Left ventricle myocardium inferior (tissue), 1 donor: ENCODE measurements at regions of chr3 and their contacts with region 1.

Region 1: DNA sequence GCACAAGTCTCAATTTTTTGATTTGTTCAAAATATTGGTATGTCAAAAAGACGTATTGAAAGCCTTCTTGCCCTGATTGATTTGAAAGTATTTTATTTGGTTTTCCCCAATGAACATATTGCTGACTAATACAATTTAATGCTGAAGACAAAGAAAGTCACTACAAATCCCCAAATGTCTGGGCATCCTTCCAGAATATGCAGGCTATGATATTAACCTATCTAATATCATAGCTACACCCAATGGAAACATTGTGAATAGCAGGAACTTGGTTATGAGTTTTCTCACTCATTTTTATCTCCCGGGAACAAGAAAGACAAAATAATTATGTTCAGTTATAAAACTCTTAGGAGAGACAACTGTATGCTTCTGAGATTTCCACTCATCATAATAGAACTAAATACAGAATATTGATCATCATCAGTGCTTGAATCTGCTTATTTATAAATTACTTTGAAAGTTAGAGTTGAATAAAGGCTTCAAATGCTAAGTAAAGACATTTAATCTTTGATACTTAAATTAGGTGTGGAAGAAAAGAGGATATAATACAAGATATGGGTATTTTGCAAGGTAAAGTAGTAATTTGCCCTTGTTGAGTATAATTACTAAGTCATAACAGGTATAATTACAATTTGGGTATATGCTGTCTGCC is 483.9 kb downstream of the RBMS3 start:
- DNase-seq: no peak
- H3K4me3 ChIP-seq: no peak overlapping the region
- H3K27ac ChIP-seq: peak overlapping the region; percentile 3
- H3K4me1 ChIP-seq: peaks cover 39% of the 10 kb centered on the region
- H3K27me3 ChIP-seq: no peaks in the 10 kb centered on the region
- CTCF ChIP-seq: peak; percentile 82

Region 2: DNA sequence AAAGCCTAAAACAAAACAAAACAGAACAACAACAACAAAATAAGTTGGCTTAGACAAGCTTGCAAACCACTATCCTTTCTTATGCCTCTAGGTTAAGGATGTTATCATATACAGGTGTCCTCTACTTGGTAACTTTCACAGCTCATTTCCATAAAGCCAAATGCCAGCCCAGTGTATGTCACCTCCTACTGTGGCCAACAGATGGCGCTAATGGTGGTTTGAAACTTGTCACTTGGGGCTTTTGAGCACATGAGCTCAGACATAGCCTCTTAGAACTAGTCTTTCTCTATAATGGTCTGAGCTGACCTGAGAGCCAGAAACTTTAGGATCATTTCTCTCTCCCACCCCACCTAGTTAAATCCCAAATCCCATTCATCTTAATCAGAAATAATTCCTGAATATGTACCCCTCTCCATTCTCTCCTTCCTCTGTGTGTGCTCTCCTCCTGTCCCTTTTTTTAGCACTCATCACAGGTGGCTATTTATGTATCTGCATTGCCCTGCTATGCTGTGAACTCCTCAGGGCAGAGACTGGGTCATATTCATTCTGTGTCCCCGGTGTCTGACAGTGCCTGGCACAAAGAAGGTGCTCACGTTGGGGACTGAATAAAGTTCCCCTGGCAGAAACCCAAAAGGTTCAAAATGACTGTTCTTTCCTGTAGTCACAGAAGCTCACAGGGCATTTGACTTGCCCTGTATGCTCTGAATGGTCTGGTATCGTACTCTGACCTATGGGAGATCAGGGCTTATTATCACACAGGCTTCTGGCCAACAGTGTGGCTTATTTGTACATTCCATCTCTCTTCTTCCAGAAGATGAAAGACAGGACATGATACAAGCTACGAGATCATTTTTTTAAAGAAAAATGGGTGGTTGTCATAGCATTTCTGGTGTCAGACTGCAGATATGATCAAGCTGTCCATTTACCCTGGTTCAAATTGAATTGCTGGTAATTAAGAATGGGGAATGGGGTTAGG is 1096.8 kb before region 1 on chr3:
- intact Hi-C with region 1: loop called (anchors 10 kb)
- DNase-seq: peak; percentile 39
- H3K4me3 ChIP-seq: no peak overlapping the region
- H3K27ac ChIP-seq: peak overlapping the region; percentile 79
- H3K4me1 ChIP-seq: peaks cover 32% of the 10 kb centered on the region
- H3K27me3 ChIP-seq: no peaks in the 10 kb centered on the region
- CTCF ChIP-seq: peak; percentile 90

Region 3: GRCh38 chr3:28916713-28917499 is 847.8 kb before region 1 on chr3:
- intact Hi-C with region 1: loop called (anchors 10 kb)
- DNase-seq: peak; percentile 54
- H3K4me3 ChIP-seq: peak overlapping the region; percentile 52
- H3K27ac ChIP-seq: peak overlapping the region; percentile 69
- H3K4me1 ChIP-seq: peaks cover 10% of the 10 kb centered on the region
- H3K27me3 ChIP-seq: no peaks in the 10 kb centered on the region
- CTCF ChIP-seq: peak; percentile 79

Region 4: GRCh38 chr3:29144807-29145206 is 619.9 kb before region 1 on chr3:
- intact Hi-C with region 1: loop called (anchors 10 kb)
- DNase-seq: peak; percentile 20
- H3K4me3 ChIP-seq: no peak overlapping the region
- H3K27ac ChIP-seq: no peak overlapping the region
- H3K4me1 ChIP-seq: peaks cover 19% of the 10 kb centered on the region
- H3K27me3 ChIP-seq: no peaks in the 10 kb centered on the region
- CTCF ChIP-seq: peak; percentile 59